ENCODE measurements at regions of chr6 and their contacts with region 1.

Region 1: DNA sequence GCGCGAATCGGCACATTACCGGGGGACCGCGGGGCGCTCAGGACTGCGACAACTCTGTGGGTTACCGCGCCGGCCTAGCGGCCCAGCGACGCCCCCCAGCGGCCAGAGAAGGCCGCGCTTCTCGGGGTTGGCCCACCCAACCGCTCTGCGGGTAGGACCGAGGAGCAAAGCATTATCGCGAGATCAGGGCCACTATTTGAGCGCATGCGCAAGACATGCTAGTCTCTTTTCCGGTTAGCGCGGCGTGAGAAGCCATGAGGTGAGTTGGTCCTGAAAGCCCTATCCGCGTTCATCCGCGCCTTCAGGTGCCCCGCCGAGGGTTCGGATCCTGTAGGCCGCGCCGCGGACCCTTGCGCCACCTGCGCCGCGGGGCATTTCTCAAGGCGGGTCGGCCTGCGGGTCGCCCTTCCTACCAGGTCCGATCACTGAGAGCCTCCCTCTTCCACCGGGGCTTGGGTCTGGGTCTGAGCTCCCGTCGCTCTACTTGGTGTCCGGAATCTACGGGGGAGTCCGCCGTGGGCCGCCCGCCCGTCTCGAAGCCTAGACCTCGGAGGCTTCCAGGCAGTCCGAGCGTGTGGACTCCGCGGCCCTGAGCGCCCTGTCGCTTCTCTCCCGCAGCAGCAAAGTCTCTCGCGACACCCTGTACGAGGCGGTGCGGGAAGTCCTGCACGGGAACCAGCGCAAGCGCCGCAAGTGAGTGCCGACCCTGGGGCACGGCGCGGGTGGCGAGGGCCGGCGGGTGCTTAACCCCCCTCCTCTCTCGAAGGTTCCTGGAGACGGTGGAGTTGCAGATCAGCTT is at the start of gene RPL10A:
- DNase-seq: peak; percentile 97
- H3K4me3 Mint-ChIP-seq: peak within 1 kb of the TSS; percentile 95
- H3K27ac Mint-ChIP-seq: peak within 1 kb of the TSS; percentile 97
- H3K4me1 Mint-ChIP-seq: peaks cover 13% of the 10 kb centered on the region
- H3K27me3 Mint-ChIP-seq: no peaks in the 10 kb centered on the region
- CTCF ChIP-seq: peak; percentile 92
- total RNA-seq, gene RPL10A: 2,403 and 2,457 TPM in 2 replicates

Region 2: DNA sequence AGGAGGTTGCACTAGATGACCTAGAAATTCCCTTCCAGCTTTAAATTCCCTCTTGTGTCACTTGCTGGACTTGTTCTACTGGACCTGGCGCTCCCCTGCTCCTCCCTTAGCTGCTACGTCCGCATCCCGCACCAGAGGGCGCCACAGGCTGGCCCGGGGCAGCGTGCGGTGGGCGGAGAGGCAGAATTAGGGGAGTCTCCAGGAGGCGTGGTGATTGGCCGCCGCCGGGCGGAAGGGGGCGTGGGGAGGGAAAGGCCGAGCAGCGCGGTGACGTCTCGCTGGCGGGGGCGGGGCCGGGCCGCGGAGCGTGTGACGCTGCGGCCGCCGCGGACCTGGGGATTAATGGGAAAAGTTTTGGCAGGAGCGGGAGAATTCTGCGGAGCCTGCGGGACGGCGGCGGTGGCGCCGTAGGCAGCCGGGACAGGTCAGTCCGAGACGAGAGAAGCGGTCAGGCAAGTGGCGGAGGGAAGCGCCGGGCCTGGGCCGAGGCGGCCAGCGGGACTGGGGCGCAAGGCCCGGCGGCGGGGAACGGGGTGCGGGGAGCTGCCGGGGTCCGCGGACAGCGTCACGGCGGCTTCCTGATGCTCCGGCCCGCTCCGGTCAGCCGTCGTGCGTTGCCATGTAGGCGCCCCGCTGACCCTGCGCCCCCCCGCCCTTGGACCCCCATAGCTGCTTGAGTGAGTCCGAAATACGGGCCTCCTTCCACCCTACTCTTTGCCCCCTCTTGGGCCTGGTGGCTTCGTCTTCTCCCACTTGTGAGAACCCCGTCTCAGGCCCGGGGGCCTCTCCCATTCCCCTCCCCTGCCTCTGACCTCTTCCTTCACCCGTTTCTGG is 125.9 kb before region 1 on chr6 and contains the start of gene PPARD:
- CTCF ChIA-PET with region 1: interaction called, 8 read pairs
- POLR2A ChIA-PET with region 1: interaction called, 17 read pairs
- intact Hi-C with region 1: loop called (anchors 1 kb)
- DNase-seq: peak; percentile 97
- H3K4me3 Mint-ChIP-seq: peak within 1 kb of the TSS; percentile 82
- H3K27ac Mint-ChIP-seq: peak within 1 kb of the TSS; percentile 95
- H3K4me1 Mint-ChIP-seq: peaks cover 18% of the 10 kb centered on the region
- H3K27me3 Mint-ChIP-seq: peaks cover 12% of the 10 kb centered on the region
- CTCF ChIP-seq: peak; percentile 95
- total RNA-seq, gene PPARD: 13.8 and 16.8 TPM in 2 replicates

Region 3: GRCh38 chr6:35415065-35415991 is 53.1 kb before region 1 on chr6:
- CTCF ChIA-PET with region 1: interaction called, 6 read pairs
- POLR2A ChIA-PET with region 1: interaction called, 4 read pairs
- intact Hi-C with region 1: loop called (anchors 1 kb)
- DNase-seq: peak; percentile 79
- H3K4me3 Mint-ChIP-seq: no peak overlapping the region
- H3K27ac Mint-ChIP-seq: peak overlapping the region; percentile 2
- H3K4me1 Mint-ChIP-seq: peaks cover 4% of the 10 kb centered on the region
- H3K27me3 Mint-ChIP-seq: no peaks in the 10 kb centered on the region
- CTCF ChIP-seq: peak; percentile 56

Region 4: GRCh38 chr6:35452186-35453090 is 15.9 kb before region 1 on chr6 and contains the start of gene FANCE:
- CTCF ChIA-PET with region 1: interaction called, 20 read pairs
- POLR2A ChIA-PET with region 1: interaction called, 198 read pairs
- intact Hi-C with region 1: loop called (anchors 1 kb)
- DNase-seq: peak; percentile 92
- H3K4me3 Mint-ChIP-seq: peak within 1 kb of the TSS; percentile 74
- H3K27ac Mint-ChIP-seq: no peak within 1 kb of the TSS
- H3K4me1 Mint-ChIP-seq: peaks cover 26% of the 10 kb centered on the region
- H3K27me3 Mint-ChIP-seq: no peaks in the 10 kb centered on the region
- CTCF ChIP-seq: no peak
- total RNA-seq, gene FANCE: 12.3 and 13.3 TPM in 2 replicates

Region 5: GRCh38 chr6:35457907-35458306 is 10.5 kb before region 1 on chr6:
- CTCF ChIA-PET with region 1: interaction called, 20 read pairs
- POLR2A ChIA-PET with region 1: interaction called, 198 read pairs
- intact Hi-C with region 1: loop called (anchors 1 kb)
- DNase-seq: no peak
- H3K4me3 Mint-ChIP-seq: no peak overlapping the region
- H3K27ac Mint-ChIP-seq: no peak overlapping the region
- H3K4me1 Mint-ChIP-seq: peaks cover 21% of the 10 kb centered on the region
- H3K27me3 Mint-ChIP-seq: no peaks in the 10 kb centered on the region
- CTCF ChIP-seq: no peak

Region 6: GRCh38 chr6:35489995-35490733 is 21.8 kb after region 1 on chr6:
- CTCF ChIA-PET with region 1: interaction called, 5 read pairs
- POLR2A ChIA-PET with region 1: interaction called, 45 read pairs
- intact Hi-C with region 1: loop called (anchors 2 kb)
- DNase-seq: no peak
- H3K4me3 Mint-ChIP-seq: no peak overlapping the region
- H3K27ac Mint-ChIP-seq: no peak overlapping the region
- H3K4me1 Mint-ChIP-seq: peaks cover 41% of the 10 kb centered on the region
- H3K27me3 Mint-ChIP-seq: no peaks in the 10 kb centered on the region
- CTCF ChIP-seq: no peak

Region 7: DNA sequence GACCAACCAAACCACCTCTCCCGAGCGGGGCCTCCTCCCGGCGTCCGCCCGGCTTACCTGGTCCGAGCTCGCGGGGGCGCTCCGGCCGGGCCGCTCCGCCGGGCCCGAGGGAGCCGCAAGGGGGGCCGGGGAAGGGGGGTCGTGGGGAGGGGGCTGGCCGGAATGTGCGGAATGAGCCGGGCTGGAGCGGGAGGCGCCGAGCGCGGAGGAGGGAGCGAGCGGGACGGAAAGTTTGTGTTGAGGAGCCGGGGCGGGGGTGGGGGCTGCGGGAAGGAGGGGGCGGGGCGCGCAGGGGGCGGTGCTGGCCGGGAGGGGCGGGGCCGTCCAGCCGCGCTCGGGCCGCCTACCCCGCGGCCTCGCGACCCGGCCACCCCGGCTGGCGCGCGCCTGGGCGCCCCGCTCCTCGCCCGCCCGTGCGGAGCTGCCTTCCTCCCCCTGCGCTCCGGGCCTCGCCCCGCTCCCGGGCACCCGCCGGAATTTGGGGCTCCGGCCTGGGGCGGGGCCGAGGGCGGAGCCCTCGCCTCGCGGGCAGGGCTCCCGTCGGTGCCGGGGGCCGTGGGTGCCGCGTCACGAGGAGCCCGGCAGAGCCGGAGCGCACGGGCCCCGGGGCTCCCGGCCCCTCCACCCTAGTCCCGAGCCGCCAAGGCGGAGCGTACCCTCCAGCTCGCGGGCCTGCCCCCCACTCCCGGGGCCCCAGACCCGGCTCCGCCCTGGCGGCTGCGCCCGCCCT is 28.6 kb after region 1 on chr6 and contains the start of gene TEAD3:
- CTCF ChIA-PET with region 1: interaction called, 4 read pairs
- POLR2A ChIA-PET with region 1: interaction called, 45 read pairs
- intact Hi-C with region 1: no loop called
- DNase-seq: peak; percentile 64
- H3K4me3 Mint-ChIP-seq: peak within 1 kb of the TSS; percentile 73
- H3K27ac Mint-ChIP-seq: no peak within 1 kb of the TSS
- H3K4me1 Mint-ChIP-seq: peaks cover 17% of the 10 kb centered on the region
- H3K27me3 Mint-ChIP-seq: no peaks in the 10 kb centered on the region
- CTCF ChIP-seq: peak; percentile 31
- total RNA-seq, gene TEAD3: 11.1 and 13.3 TPM in 2 replicates

Measured in MCF 10A (cell line).